ENCODE measurements at regions of chr5 and their contacts with region 1.

Region 1: DNA sequence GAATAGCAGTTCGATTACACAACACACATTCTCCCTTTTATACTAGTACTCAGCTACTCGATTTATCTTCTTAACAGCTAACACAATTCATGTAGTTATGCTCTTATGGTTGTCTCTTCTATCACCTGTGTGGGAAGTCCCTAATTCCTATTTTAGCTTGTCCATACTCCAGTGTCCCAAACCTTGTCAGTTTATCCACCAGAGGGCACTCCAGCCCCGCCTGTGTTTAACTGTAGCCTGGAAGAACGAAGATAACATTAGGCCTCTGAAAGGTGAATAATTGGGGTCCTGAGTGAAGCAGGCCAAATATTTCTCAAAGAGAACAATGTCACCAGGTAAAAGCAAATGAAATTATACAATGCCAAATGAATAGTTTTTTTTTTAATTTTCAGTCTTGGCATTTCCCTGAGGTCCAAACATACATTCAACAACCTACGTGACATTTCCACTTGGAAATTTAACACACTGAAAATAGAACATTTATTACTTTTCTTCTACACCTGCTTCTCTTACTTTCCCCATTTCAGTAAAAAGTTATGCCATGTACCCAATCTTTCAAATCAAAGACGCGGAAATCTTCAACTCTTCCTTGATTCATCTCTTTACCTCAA is 560.7 kb downstream of the HTR1A start:
- DNase-seq: peak; percentile 6
- ATAC-seq: peak; percentile 55; the same call in 1 of the 2 replicates
- H3K4me3 ChIP-seq: no peak overlapping the region
- H3K27ac ChIP-seq: no peak overlapping the region
- H3K4me1 ChIP-seq: no peaks in the 10 kb centered on the region
- H3K27me3 ChIP-seq: no peaks in the 10 kb centered on the region
- CTCF ChIP-seq: peak; percentile 19 to 72 (median 61); a peak in 5 of 6 replicates
- POLR2A ChIP-seq: no peak
- RAD21 ChIP-seq: peak; percentile 53

Region 2: DNA sequence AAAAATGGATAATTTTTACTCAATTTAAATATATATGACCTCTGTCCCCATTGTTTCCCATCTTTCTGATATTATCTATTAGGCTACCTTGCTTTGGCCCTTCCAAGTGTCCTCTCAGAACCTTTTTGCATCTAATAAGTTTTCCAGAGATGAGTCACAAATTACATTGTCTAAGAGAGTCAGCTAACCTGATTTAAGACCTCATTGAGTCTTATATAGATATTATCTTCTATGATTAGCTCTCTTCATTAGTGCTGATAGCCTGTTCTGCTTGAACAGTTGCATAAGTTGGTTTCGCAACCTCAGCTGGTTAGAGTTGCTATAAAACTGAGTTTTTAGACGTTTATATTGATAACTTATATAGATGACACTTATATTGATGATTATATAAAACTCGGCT is 199.8 kb before region 1 on chr5:
- CTCF ChIA-PET with region 1: no interaction called
- POLR2A ChIA-PET with region 1: no interaction called
- RAD21 ChIA-PET with region 1: no interaction called
- intact Hi-C with region 1: no loop called
- DNase-seq: no peak
- ATAC-seq: no peak
- H3K4me3 ChIP-seq: no peak overlapping the region
- H3K27ac ChIP-seq: no peak overlapping the region
- H3K4me1 ChIP-seq: no peaks in the 10 kb centered on the region
- H3K27me3 ChIP-seq: no peaks in the 10 kb centered on the region
- CTCF ChIP-seq: no peak
- POLR2A ChIP-seq: no peak
- RAD21 ChIP-seq: no peak

Region 3: GRCh38 chr5:63963080-63963735 is 561.7 kb after region 1 on chr5:
- CTCF ChIA-PET with region 1: no interaction called
- POLR2A ChIA-PET with region 1: no interaction called
- RAD21 ChIA-PET with region 1: no interaction called
- intact Hi-C with region 1: loop called (anchors 1 kb)
- DNase-seq: peak; percentile 19
- ATAC-seq: no peak
- H3K4me3 ChIP-seq: no peak overlapping the region
- H3K27ac ChIP-seq: no peak overlapping the region
- H3K4me1 ChIP-seq: no peaks in the 10 kb centered on the region
- H3K27me3 ChIP-seq: no peaks in the 10 kb centered on the region
- CTCF ChIP-seq: peak in 2 of 3 experiments; percentile 41 to 56; a peak in 4 of 6 replicates
- POLR2A ChIP-seq: no peak
- RAD21 ChIP-seq: peak; percentile 31

Region 4: DNA sequence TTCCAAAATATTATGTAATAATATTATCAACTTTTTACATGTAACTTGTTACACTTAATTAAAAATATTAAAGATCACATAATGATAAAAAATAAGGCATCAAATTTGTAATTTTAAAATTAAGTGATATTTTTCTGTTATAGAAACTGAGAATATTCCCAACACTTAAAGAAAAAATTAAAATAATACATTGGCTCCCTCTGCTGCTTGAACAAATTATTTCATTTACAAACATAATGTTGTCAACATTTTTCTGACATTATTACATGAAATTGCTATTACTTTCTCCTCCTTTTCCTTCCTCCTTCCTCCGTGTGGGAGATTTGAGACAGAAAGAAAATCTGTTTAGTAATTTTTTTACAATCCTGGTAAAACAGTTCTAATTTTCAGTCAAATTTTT is 806.4 kb after region 1 on chr5:
- CTCF ChIA-PET with region 1: no interaction called
- POLR2A ChIA-PET with region 1: no interaction called
- RAD21 ChIA-PET with region 1: no interaction called
- intact Hi-C with region 1: loop called (anchors 1 kb)
- DNase-seq: no peak
- ATAC-seq: no peak
- H3K4me3 ChIP-seq: no peak overlapping the region
- H3K27ac ChIP-seq: no peak overlapping the region
- H3K4me1 ChIP-seq: no peaks in the 10 kb centered on the region
- H3K27me3 ChIP-seq: no peaks in the 10 kb centered on the region
- CTCF ChIP-seq: peak in 2 of 3 experiments; percentile 17 to 33; a peak in 3 of 6 replicates
- POLR2A ChIP-seq: no peak
- RAD21 ChIP-seq: 0 out of 2 replicates have a peak, but pooled peaks have one; percentile 15